MCF 10A (cell line): ENCODE measurements at regions of chr15 and their contacts with region 1.

Region 1: DNA sequence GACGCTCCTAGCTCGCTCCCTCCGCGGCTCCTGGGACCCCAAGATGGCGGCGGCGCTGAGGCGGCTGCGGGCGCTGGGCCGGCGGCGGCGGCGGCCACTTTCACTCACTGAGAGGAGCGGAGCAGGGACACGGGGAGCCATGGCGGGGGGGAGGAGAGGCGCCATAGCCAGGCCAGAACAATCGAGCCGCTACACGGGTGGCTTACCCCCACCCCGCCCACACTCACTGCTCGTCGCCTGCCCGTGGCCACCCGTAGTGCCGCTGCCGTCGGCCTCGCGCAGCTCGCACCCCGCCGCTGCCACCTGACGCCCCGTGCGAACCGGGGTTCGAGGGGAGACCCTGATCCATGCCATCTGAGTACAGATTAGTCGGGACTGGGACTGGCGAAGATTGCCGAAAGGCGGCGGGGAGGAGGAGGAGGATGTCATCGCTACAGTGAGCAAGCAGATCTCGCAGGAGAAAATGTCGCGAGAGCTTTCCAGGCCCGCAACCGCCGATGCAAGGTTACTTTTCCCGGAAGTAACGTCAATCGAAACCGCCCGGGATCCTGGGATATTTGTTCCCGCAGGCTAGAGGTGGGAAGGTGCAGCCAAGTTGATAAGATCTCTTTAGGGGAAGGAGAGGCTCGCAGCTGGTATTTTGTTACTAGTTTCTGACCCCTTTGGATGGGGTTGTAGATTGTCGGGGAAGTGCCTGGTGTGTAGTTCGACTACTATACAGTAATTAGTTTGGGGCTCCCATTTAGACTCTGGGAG is at the start of gene INO80:
- DNase-seq: peak; percentile 99
- H3K4me3 Mint-ChIP-seq: peak within 1 kb of the TSS; percentile 88
- H3K27ac Mint-ChIP-seq: peak within 1 kb of the TSS; percentile 99
- H3K4me1 Mint-ChIP-seq: no peaks in the 10 kb centered on the region
- H3K27me3 Mint-ChIP-seq: no peaks in the 10 kb centered on the region
- CTCF ChIP-seq: no peak
- total RNA-seq, gene INO80: 32.3 and 33.8 TPM in 2 replicates

Region 2: DNA sequence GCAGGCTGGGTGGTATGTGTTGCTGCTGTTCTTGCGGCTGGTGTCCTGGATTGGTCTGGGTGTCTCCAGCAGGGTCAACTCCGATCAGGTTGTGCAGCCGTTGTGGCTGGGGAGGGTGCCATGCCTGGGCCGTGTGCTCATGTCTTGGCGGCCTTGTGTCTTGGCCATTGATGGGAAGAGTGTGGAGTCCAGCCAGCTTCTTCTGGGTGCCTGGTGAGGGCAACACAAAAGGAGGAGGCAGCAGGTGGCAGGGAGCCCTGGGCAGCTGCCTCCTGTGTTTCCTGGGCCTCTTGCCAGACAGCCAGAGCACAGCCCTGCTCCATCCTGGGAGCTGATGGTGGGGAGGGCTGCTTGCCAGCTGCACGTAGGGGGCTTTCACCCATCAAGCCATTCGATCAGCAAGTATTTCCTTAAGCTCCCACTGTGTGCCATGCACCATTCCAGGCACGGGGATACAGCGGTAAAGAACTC is 158.7 kb before region 1 on chr15:
- CTCF ChIA-PET with region 1: no interaction called
- POLR2A ChIA-PET with region 1: no interaction called
- intact Hi-C with region 1: no loop called
- DNase-seq: peak; percentile 50
- H3K4me3 Mint-ChIP-seq: no peak overlapping the region
- H3K27ac Mint-ChIP-seq: no peak overlapping the region
- H3K4me1 Mint-ChIP-seq: peaks cover 38% of the 10 kb centered on the region
- H3K27me3 Mint-ChIP-seq: no peaks in the 10 kb centered on the region
- CTCF ChIP-seq: no peak

Region 3: GRCh38 chr15:41283653-41284426 is 167.5 kb after region 1 on chr15:
- CTCF ChIA-PET with region 1: no interaction called
- POLR2A ChIA-PET with region 1: interaction called, 10 read pairs
- intact Hi-C with region 1: no loop called
- DNase-seq: peak; percentile 99
- H3K4me3 Mint-ChIP-seq: peak overlapping the region; percentile 95
- H3K27ac Mint-ChIP-seq: peak overlapping the region; percentile 95
- H3K4me1 Mint-ChIP-seq: peaks cover 28% of the 10 kb centered on the region
- H3K27me3 Mint-ChIP-seq: no peaks in the 10 kb centered on the region
- CTCF ChIP-seq: no peak